ENCODE measurements at regions of chr1 and their contacts with region 1.

Region 1: DNA sequence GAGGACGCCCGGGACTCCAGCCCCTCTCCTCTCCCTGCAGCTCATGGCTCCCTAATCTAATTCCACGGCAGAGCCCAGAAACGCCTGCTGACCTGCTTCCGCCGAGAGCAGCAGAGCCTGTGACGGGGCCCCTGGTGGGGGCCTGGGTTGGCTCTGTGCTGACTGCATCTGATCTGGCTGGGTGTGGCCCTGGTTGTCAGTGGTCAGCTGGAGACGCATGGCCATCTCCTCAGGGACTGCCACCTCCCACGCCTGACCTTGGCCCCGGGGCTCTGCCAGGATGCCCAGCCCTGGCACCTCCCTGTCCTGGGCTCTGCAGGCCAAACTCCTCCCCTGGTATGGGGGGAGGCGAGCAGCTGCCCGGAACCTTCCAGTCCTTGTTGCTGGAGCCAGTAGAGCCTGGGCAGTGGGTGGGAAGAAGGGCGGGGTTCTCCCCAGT is 1.1 kb upstream of the PLCH2 start:
- DNase-seq: no peak
- ATAC-seq: peak; percentile 46
- H3K4me3 ChIP-seq: no peak overlapping the region
- H3K27ac ChIP-seq: peak overlapping the region; percentile 79
- H3K4me1 ChIP-seq: peaks cover 88% of the 10 kb centered on the region
- H3K27me3 ChIP-seq: no peaks in the 10 kb centered on the region
- CTCF ChIP-seq: no peak

Region 2: DNA sequence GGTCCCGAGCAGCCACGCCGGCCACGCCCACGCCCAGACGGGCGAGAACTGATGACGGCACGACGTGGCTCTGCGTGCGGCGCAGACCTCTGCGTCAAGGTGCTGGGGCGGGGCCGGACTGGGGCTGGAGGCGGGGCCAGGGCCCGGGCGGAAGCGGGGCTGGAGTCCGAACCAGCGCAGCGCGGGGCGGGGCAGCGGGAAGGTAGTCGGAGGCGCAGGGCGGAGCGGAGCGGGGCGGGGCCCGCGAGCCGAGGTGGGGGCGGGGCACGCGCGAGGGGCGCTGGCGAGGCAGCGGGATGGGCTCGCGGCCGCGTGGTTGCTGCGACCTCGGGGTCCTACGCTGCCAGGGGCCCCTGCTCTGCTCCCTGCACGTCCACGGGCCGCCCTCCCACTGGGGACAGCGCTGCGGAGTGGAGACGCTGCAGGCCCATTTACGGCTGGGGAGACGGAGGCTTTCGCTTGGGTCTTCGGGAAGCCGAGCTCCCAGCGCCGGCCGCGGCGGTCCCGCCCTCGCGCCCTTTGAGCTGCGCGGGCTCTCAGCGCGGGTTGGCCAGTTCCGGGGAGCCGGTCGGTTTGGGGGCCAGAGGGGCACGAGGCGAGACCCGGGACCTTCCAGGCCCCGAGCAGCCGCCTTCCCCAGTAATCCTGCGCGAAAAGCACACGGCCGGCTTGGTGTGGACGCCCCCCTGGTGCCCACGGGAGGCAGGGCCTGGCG is 62.3 kb before region 1 on chr1 and contains the start of gene PEX10:
- CTCF ChIA-PET with region 1: interaction called, 4 read pairs
- POLR2A ChIA-PET with region 1: no interaction called
- in situ Hi-C with region 1: no loop called
- intact Hi-C with region 1: loop called (anchors 10 kb)
- DNase-seq: peak; percentile 72
- ATAC-seq: peak; percentile 89
- H3K4me3 ChIP-seq: peak within 1 kb of the TSS; percentile 86 to 87
- H3K27ac ChIP-seq: peak within 1 kb of the TSS; percentile 91
- H3K4me1 ChIP-seq: peaks cover 19% of the 10 kb centered on the region
- H3K27me3 ChIP-seq: no peaks in the 10 kb centered on the region
- CTCF ChIP-seq: no peak
- total RNA-seq, gene PEX10: 49.8 TPM